Motor neuron (in vitro differentiated cells): ENCODE measurements at regions of chr2 and their contacts with region 1.

Region 1: DNA sequence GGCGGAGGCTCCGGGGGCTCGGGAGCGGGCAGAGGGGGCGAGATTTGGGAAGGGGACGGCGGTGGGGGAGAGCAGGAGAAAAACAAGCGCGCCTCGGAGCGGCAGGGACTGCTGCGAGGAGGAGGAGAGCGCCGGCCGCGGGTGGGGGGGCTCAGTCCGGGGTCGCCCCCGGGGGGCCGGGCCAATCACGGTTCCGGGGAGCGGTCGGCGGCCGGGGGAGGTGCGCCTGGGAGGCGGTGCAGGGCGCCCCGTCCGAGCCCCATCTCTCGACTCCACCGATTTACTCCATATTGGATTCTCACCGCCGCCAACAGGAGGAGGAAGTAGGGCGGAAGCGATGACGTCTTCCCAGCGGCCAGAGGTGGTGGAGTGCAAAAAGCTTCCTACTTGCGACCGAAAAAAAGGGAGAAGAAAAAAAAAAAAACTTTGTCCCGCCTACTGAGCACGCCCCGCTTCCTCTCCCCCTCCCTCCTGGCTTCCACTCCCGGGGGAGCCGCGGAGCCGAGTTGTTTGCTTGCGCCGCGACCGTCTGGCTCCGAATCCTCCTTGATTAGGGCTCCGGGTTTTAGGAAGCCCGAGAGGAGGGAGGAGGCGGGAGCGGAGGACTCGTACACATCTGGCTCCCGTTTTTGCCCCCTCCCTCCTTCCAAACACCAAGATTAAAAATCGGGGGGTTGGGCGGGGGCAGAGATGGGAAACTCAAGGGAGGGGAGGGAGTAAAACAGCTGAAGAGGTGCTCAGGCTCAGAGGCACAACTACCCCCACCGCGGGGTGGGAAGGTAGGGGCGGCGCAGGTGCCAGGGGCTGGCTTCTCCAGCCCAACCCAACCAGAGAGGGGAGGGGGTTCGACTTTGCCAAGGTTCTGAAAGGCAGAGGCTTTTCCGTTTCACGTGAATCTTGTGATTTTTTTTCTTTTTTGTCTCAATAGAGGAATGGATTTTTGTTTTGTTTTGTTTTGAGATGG is at the start of gene SPRED2:
- ATAC-seq: peak; percentile 18 to 49 (median 22)
- H3K4me3 ChIP-seq: peak within 1 kb of the TSS; percentile 64 to 79 (median 77)
- H3K27ac ChIP-seq: peak within 1 kb of the TSS; percentile 92
- H3K4me1 ChIP-seq: peaks cover 15 to 20% of the 10 kb centered on the region in 2 donors
- total RNA-seq, gene SPRED2: 8.9 to 38.3 (median 15.5) TPM

Region 2: GRCh38 chr2:65264821-65265670 is 167.5 kb before region 1 on chr2:
- in situ Hi-C with region 1: loop called in 2 of 9 experiments (anchors 25 kb)
- ATAC-seq: peak; percentile 22 to 87 (median 50)
- H3K4me3 ChIP-seq: no peak overlapping the region
- H3K27ac ChIP-seq: no peak overlapping the region
- H3K4me1 ChIP-seq: no peaks in the 10 kb centered on the region

Region 3: GRCh38 chr2:65278531-65278981 is 154.0 kb before region 1 on chr2:
- in situ Hi-C with region 1: loop called in 3 of 9 experiments (anchors 25 kb)
- ATAC-seq: peak in 1 of 8 experiments; percentile 17
- H3K4me3 ChIP-seq: no peak overlapping the region
- H3K27ac ChIP-seq: no peak overlapping the region
- H3K4me1 ChIP-seq: peaks cover 12 to 24% of the 10 kb centered on the region in 2 donors

Region 4: GRCh38 chr2:65545837-65546805 is 113.6 kb after region 1 on chr2:
- in situ Hi-C with region 1: loop called in 1 of 9 experiments (anchors 10 kb)
- ATAC-seq: peak in 2 of 8 experiments; percentile 30 to 71
- H3K4me3 ChIP-seq: no peak overlapping the region
- H3K27ac ChIP-seq: no peak overlapping the region
- H3K4me1 ChIP-seq: peaks cover 0 to 6% of the 10 kb centered on the region in 2 donors